Activated T-helper 1 cell treated with anti-CD3 and anti-CD28 coated beads, Interleukin-12 subunit alpha, Interleukin-12 subunit beta, Interleukin-2, Interleukin-4 antibody, amounts not matched to agents 30 ng/mL and 10 ng/mL and 1 ng/mL, durations not matched to agents 14 hours and 24 hours and 36 hours (primary cell): ENCODE measurements at regions of chr5 and their contacts with region 1.

Region 1: DNA sequence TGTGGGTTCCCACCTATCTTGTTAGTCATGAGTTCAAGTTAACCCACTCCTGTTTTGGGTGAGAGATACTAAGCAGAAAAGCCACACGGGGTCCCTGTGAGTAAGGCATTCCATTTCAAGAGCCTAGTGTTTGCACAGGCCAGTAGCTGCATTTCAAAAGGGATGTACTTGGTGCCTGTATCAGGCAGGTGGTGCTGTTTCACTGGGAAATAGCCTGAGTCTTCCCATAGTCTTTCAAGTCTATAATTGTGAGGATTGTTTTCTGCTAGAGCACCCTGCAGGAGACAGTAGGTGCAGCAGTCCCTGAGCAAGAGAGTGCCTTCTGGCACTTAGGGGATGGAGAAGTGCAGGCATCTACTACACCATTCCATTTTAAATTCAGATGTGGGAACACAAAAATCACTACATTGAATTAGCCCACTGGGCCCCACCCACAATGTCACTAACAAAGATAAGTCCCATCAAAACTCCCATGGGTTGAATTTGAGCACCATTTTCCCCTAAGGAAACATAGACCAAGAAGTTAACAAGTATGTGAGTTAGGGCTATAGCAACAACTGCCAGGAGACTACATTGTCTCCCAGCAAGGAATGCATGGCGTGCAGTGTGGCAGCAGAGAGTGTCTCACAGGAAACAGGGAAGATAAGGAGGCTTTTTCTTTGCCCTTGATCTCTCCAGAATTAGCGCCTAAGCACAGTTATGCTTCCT is 263.2 kb downstream of the COX7C start:
- DNase-seq: peak; percentile 23
- H3K4me3 Mint-ChIP-seq: no peak overlapping the region
- H3K27ac Mint-ChIP-seq: no peak overlapping the region
- H3K4me1 Mint-ChIP-seq: no peaks in the 10 kb centered on the region
- H3K27me3 Mint-ChIP-seq: peaks cover 14% of the 10 kb centered on the region

Region 2: DNA sequence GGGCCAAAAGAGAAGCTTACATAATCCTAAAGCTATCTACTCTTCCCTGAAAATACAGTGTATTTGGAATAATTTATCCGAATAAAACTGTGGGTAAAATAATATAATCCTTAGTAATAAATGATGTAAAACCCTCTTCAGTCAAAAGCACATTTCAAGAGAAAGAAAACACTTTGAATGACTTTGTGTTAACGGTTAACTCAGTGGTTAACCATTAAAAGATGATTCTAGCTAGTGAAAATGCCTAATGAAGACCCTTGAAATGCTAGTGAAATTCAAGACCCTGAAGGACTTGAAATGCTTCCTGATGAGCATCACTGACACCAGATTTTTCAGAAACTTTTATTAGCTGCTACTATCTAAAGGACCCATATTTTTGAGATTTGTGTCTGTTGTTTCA is 192.5 kb before region 1 on chr5:
- intact Hi-C with region 1: no loop called
- DNase-seq: no peak
- H3K4me3 Mint-ChIP-seq: no peak overlapping the region
- H3K27ac Mint-ChIP-seq: no peak overlapping the region
- H3K4me1 Mint-ChIP-seq: no peaks in the 10 kb centered on the region
- H3K27me3 Mint-ChIP-seq: peaks cover 1% of the 10 kb centered on the region

Region 3: DNA sequence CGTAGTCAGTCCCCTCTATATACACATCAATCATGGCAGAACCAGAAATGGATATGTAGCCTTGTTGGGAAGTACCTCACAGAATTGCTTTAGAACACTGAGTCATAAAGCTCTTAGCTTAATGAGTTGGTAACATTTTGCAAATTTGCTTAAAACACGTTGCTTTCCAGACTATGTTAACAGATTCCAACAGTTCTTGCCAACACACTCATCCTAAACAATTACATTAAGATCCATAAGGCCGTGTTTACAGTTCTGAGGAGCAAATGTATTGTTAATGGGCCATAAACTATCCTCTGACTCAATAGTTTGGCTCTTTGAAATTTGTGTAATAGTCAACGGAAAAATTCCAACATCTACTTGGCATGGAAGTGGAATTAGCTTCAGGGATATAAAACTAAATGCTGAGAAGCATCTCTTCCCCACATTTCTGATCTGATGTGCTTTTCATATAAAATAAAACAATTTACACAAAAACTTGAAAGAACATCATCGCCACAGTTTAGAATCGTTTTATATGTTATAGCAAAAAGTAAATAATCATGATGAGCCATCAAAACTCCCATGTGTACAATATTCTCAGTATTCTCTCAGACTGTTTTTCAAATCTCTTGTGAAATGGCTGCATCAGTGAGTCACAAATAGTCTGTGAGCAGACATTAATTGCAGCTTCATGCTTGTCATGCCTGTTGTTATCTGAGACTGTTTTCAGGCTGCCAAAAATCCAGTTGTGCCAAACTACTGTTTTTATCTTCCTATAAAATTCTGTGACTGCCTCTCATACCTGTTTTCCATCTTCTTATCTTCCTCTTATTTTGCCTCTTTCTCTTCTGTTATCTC is 28.7 kb after region 1 on chr5:
- intact Hi-C with region 1: no loop called
- DNase-seq: no peak
- H3K4me3 Mint-ChIP-seq: no peak overlapping the region
- H3K27ac Mint-ChIP-seq: no peak overlapping the region
- H3K4me1 Mint-ChIP-seq: no peaks in the 10 kb centered on the region
- H3K27me3 Mint-ChIP-seq: peaks cover 29% of the 10 kb centered on the region

Region 4: DNA sequence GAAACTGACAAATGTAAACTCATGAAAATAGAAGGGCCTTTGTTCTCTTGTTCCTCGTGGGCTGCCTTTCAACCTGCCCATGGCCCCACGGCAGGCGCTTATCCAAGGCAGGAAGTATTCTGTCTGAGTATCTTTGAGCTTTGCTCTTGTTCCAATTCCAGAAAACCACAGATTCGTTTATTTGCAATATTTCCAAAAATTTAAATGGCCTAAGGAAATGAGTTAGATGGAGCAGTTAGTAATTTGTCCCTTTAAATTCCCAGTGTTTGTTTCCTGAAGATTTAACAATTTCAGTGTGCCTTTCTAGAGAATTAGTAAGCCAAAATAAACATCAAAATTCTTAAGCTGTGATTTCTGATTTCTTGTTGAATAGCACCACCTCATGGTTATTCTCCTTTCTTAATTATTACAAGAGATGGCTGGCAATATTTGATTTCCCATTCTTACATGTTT is 87.4 kb after region 1 on chr5:
- intact Hi-C with region 1: loop called (anchors 1 kb)
- DNase-seq: no peak
- H3K4me3 Mint-ChIP-seq: no peak overlapping the region
- H3K27ac Mint-ChIP-seq: no peak overlapping the region
- H3K4me1 Mint-ChIP-seq: no peaks in the 10 kb centered on the region
- H3K27me3 Mint-ChIP-seq: peaks cover 16% of the 10 kb centered on the region

Region 5: GRCh38 chr5:87008751-87009560 is 128.0 kb after region 1 on chr5:
- intact Hi-C with region 1: loop called (anchors 1 kb)
- DNase-seq: no peak
- H3K4me3 Mint-ChIP-seq: no peak overlapping the region
- H3K27ac Mint-ChIP-seq: no peak overlapping the region
- H3K4me1 Mint-ChIP-seq: no peaks in the 10 kb centered on the region
- H3K27me3 Mint-ChIP-seq: peaks cover 20% of the 10 kb centered on the region